ENCODE measurements at regions of chr7 and their contacts with region 1.

Region 1: DNA sequence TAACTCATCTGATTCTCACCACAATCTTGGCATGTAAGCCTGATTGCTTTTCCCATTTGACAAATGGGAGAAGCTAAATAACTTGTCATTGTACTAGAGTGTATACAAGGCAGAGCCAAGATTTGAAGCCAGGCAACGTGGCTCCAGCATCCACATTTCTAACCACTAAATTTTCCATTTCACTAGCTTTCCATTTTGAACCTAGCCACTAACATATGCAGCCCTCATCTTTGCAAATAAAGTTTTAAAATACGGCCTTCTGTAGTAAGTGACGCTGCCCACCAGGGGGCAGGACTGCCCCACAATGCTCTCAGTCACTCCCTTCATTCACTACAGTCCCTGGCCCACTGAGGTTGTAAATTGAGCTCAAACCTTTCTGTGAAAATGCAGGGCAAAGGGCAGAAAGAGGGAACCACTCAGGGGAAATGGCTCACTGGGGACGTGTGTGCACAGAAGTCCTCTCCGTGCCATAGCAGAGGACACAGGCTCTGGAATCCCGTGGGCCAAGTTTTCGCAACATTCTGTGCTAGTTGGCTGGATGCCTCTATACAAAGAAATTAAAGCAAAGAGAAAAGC is 315.7 kb downstream of the TNS3 start:
- DNase-seq: peak in 1 of 2 donors; percentile 74
- H3K4me3 ChIP-seq: no peak overlapping the region
- H3K27ac ChIP-seq: peak overlapping the region in 1 of 2 donors; percentile 13
- H3K4me1 ChIP-seq: no peaks in the 10 kb centered on the region
- H3K27me3 ChIP-seq: no peaks in the 10 kb centered on the region
- CTCF ChIP-seq: peak; percentile 86 to 96 (median 90)

Region 2: GRCh38 chr7:46932676-46933424 is 333.4 kb before region 1 on chr7:
- intact Hi-C with region 1: no loop called
- DNase-seq: no peak
- H3K4me3 ChIP-seq: no peak overlapping the region
- H3K27ac ChIP-seq: peak overlapping the region in 1 of 2 donors; percentile 32
- H3K4me1 ChIP-seq: peaks cover 0 to 6% of the 10 kb centered on the region in 2 donors
- H3K27me3 ChIP-seq: no peaks in the 10 kb centered on the region
- CTCF ChIP-seq: no peak

Region 3: DNA sequence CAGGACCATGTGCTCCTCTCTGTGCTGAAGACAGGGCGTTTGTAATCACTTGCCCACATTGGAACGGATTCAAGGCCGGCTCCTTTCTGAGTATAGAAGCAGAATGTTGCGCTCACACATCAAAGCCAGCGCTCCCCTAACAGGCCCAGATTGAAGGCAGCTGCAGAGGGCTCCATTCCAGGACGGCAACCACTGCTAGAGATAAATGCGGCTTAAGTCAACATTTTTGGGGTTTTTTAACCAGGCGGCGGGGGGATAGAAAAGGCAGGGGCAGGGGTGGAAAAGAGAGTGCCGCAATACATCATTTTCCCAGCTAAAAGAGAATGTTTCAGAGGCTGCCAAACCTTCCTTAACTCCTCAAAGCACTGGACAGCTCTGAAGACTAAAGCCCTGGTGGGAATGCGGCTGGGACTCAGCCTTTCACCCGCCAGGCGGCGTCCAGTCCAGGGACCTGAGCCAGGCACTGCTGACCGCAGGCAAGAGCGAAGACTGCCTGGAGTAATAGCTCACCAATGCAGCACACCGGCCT is 126.1 kb after region 1 on chr7:
- intact Hi-C with region 1: loop called (anchors 2 kb)
- DNase-seq: peak in 1 of 2 donors; percentile 84
- H3K4me3 ChIP-seq: peak overlapping the region in 1 of 2 donors; percentile 31
- H3K27ac ChIP-seq: peak overlapping the region in 1 of 2 donors; percentile 32
- H3K4me1 ChIP-seq: peaks cover 0 to 3% of the 10 kb centered on the region in 2 donors
- H3K27me3 ChIP-seq: no peaks in the 10 kb centered on the region
- CTCF ChIP-seq: peak; percentile 46 to 73 (median 63)

Region 4: DNA sequence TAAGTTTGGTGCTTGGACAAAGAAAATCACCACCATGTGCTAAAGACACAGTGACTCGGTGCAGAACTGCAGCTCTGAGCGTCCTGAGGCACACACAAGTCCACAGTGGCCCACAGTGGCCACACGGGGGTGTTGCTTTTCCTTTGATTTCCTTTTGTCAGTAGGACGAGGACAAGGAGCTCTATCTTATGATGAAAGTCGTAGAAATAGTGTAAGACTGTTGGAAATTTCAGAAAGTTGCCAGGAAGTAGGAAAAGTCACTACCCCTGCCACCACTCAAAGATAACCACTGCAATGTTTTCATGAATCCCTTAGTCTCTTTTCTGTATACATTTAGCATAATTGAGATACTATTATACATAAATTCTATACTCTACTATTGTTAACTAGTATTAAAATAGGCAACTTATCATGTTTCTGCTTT is 169.7 kb after region 1 on chr7:
- intact Hi-C with region 1: loop called (anchors 10 kb)
- DNase-seq: peak in 1 of 2 donors; percentile 81
- H3K4me3 ChIP-seq: no peak overlapping the region
- H3K27ac ChIP-seq: no peak overlapping the region
- H3K4me1 ChIP-seq: no peaks in the 10 kb centered on the region
- H3K27me3 ChIP-seq: no peaks in the 10 kb centered on the region
- CTCF ChIP-seq: peak; percentile 60 to 77 (median 67)

Region 5: DNA sequence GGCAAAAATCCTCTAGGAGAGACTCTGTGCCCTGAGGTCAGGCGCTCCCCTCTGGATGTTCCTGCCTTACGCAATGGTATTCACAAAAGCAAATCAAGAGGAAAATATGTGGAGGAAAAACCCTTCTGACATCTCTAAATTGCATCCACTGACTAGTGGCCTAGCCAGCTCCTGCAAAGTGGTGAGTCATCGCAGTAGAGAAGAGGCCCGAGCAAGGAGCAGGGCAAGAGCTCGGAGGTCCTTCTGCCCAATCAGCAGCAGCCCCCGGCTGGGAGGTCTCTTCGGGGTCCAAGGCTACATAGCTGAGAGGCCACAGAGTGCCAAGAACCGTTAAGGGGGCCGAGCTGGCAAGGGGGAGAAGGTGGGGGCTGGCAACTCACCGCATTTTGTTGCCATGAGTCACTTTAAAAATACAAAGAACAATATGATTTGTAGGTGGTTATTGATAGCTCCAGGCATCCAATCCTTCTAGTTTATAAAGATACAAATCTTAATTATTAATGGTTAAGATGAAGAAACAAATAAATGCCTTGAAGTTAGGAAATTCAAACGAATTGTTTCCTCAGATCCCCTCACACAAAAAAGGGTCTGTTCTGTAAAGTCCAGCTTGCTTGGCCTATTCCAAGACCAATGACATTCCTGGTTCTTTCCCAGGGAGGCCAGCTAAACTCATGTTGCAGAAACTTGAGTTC is 520.5 kb after region 1 on chr7:
- intact Hi-C with region 1: loop called (anchors 1 kb)
- DNase-seq: peak; percentile 15 to 88
- H3K4me3 ChIP-seq: no peak overlapping the region
- H3K27ac ChIP-seq: peak overlapping the region; percentile 86 to 91
- H3K4me1 ChIP-seq: peaks cover 13 to 49% of the 10 kb centered on the region in 2 donors
- H3K27me3 ChIP-seq: no peaks in the 10 kb centered on the region
- CTCF ChIP-seq: no peak

Region 6: GRCh38 chr7:47945261-47946001 is 679.2 kb after region 1 on chr7:
- intact Hi-C with region 1: loop called (anchors 10 kb)
- DNase-seq: peak in 1 of 2 donors; percentile 88
- H3K4me3 ChIP-seq: no peak overlapping the region
- H3K27ac ChIP-seq: no peak overlapping the region
- H3K4me1 ChIP-seq: peaks cover 7 to 12% of the 10 kb centered on the region in 2 donors
- H3K27me3 ChIP-seq: no peaks in the 10 kb centered on the region
- CTCF ChIP-seq: peak; percentile 51 to 84 (median 83)

Measured in ascending aorta (tissue), 2 donors.